Dorsolateral prefrontal cortex (tissue), 120 donors: ENCODE measurements at regions of chr5 and their contacts with region 1.

Region 1: DNA sequence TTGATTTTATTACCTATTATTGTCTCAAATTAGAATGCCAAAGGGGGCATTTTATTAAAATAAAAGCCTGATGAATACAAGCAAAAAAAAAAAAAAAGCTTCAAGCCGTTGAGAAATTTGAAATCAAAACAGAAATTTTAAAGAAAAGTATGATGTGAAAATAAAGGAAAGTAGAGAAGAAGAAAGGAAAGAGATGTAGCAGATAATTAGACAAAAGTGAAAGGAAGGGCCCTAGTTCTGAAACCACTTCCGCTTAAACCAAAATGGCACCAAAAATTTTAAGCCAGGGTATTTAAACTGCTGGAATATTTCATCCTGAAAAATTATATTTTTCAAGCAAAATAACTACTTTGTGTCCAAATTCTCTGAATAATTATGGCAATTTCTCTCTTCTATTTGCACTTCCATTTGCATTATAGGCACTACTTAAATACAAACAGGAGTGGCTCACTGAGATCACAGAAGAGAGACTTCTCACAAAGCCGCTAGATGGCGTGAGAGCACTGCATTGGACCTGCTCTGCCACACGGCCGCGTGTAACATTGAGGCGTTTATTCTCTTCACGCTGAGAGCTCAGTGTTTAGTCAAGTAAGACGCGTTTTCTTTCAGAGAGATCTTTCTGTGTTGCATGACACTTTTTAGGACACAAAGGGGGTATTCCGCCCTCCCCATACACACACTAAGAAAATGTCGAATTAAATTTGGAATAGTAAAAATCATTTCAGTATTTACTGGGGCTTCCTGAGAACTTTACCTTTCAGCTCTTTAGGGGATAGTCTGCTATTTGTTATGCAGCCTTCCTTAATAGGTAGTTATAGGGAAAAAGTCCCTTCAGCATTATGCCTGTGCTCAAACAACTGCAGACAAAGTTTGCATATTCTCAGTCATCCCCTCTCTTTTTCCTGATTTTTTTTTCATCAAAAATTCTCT is 368.4 kb upstream of the CCNH start:
- DNase-seq: peak; percentile 59 to 93 (median 88)
- H3K4me3 ChIP-seq: peak overlapping the region in 50 of 59 donors; percentile 1 to 47 (median 25)
- H3K27ac ChIP-seq: peak overlapping the region in 58 of 59 donors; percentile 25 to 94 (median 82)
- H3K27me3 ChIP-seq: no peaks in the 10 kb centered on the region
- CTCF ChIP-seq: peak; percentile 85 to 99 (median 96)

Region 2: GRCh38 chr5:88190139-88190834 is 409.2 kb after region 1 on chr5:
- intact Hi-C with region 1: loop called in 1 of 2 experiments (anchors 2 kb)
- DNase-seq: peak in 5 of 10 donors; percentile 14 to 43 (median 32)
- H3K4me3 ChIP-seq: peak overlapping the region in 55 of 59 donors; percentile 5 to 58 (median 38)
- H3K27ac ChIP-seq: peak overlapping the region in 26 of 59 donors; percentile 5 to 77 (median 37)
- H3K27me3 ChIP-seq: no peaks in the 10 kb centered on the region
- CTCF ChIP-seq: peak in 55 of 56 donors; percentile 43 to 85 (median 66)

Region 3: DNA sequence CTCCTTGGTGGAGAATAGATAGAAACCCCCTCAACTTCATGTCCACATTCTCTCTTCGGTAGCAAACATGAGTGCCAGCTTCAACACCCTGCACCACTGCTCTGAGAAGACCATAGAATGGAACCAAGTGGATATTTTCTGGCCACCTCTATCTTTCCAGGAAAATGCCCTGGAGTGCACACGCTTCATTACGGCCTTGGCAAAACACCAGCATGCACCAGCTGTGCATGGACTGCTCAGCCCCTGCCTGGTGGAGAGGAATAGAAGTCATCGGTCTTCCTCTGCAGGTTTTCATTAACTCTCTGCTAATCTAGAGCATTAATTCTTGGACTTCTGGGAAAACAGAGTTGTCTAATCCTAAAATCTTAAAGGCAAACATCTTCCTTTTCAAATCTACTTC is 699.1 kb after region 1 on chr5:
- intact Hi-C with region 1: loop called in 1 of 2 experiments (anchors 10 kb)
- DNase-seq: peak in 5 of 10 donors; percentile 21 to 42 (median 35)
- H3K4me3 ChIP-seq: peak overlapping the region in 23 of 59 donors; percentile 0 to 49 (median 15)
- H3K27ac ChIP-seq: peak overlapping the region in 22 of 59 donors; percentile 1 to 63 (median 30)
- H3K27me3 ChIP-seq: no peaks in the 10 kb centered on the region
- CTCF ChIP-seq: no peak

Region 4: GRCh38 chr5:88690409-88691229 is 909.5 kb after region 1 on chr5:
- intact Hi-C with region 1: loop called in 1 of 2 experiments (anchors 2 kb)
- DNase-seq: peak; percentile 77 to 95 (median 90)
- H3K4me3 ChIP-seq: peak overlapping the region; percentile 46 to 93 (median 70)
- H3K27ac ChIP-seq: peak overlapping the region; percentile 61 to 100 (median 99)
- H3K27me3 ChIP-seq: peaks cover 0 to 13% (median 0%) of the 10 kb centered on the region in 45 donors
- CTCF ChIP-seq: peak; percentile 85 to 99 (median 96)